ENCODE measurements at regions of chr3 and their contacts with region 1.

Region 1: DNA sequence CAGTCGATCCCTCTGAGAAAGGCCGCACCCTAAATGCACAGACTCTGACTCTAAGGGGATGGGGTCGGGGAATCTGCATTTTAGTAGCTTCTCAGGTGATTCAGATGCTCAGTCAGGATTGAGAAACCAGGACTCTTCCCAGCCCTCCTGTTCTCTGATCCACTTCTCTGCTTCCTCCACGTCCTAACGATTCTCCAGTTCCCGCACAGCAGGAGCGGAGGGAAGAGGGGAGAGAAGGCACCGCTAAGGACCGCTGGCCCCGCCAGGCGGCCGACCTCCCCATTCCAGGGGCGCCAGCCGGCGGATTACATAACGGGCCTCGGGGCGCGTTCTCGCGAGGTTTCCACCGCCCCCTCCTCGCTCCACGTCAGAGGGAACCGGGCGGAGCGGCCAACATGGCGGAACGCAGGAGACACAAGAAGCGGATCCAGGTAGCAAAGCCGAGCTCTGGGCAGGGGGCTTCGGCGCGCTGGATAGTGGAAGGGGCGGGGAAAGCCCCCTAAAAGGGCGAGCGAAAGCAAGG is at the start of gene SEC62:
- DNase-seq: peak; percentile 97
- ATAC-seq: peak; percentile 99
- total RNA-seq, gene SEC62: 85.4 TPM

Region 2: DNA sequence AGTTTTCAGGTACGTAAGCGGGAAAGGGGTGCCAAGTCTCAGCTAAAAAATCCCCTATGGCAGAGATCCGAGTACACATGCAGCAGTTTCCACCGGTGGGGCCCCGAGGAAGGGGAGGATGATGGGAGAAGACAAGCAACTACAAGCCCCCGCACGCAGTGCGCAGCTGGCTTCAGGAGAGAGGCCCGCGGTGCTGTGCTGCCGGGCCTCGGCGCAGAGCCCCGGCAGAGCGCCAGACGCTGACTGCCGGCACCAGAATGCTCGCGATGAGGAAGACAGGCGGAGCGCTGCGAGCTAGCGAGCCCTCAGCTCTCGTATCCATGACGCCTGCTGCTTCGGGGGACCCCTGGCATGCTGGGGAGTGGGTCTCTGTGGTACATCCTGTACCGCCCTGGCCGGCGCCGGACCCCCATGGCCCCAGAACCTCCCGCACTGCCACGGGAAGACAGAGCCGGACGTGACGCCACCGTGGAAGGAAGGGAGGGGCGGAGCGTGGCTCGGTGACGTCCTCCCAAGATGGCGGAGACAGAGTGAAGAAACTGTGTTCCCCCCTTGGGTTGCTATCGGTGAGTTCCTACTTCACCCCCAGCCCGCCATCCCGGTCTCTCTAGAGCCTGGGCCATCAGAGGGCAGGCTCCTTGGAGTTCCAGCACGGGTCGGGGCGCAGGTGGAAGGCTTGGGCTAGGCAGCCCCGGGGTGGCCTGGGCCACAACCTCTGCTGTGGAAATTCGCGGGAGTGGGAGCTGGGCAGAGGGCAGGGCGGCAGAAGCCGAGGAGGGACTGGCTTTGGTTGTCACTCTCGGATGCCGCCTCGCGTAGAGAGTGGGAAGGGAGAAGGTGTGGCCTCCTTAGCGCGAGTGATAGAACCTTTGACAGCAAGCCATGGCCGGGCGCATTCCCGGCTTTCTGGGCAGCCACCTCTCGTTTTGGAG is 193.3 kb before region 1 on chr3 and contains the start of gene MYNN:
- intact Hi-C with region 1: loop called (anchors 10 kb)
- DNase-seq: peak; percentile 95
- ATAC-seq: peak; percentile 94
- total RNA-seq, gene MYNN: 11.4 TPM

Region 3: GRCh38 chr3:169863458-169863899 is 103.0 kb before region 1 on chr3:
- intact Hi-C with region 1: loop called (anchors 5 kb)
- DNase-seq: peak; percentile 50
- ATAC-seq: peak; percentile 90